ENCODE measurements at regions of chr3 and their contacts with region 1.

Region 1: GRCh38 chr3:156307704-156308103 is 187.3 kb downstream of the KCNAB1 start:
- DNase-seq: no peak
- H3K4me3 ChIP-seq: no peak overlapping the region
- H3K27ac ChIP-seq: peak overlapping the region in 2 of 4 donors; percentile 11 to 16
- H3K4me1 ChIP-seq: peaks cover 0 to 31% (median 31%) of the 10 kb centered on the region in 4 donors
- H3K27me3 ChIP-seq: no peaks in the 10 kb centered on the region
- CTCF ChIP-seq: no peak
- EP300 ChIP-seq: no peak
- POLR2A ChIP-seq: no peak

Region 2: DNA sequence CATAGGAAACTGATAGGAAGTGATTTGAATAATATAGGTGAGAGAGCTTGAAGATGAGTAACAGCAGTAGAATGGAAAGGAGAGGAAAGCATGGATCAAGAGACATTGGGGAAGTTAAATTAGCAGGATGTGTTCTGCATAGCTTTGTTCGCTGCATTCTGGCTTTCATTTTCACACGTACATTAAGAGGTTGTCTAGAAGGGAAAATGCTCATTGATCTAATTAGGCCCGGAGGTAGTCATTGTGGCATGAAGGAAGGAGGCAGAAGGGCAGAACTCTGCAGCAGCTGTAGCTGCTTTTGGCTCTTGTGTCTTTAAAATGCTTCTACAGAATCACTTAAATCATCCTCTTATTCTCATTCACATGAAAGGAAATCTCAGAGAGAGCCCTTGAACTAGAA is 147.1 kb before region 1 on chr3:
- intact Hi-C with region 1: loop called (anchors 10 kb)
- DNase-seq: peak; percentile 75
- H3K4me3 ChIP-seq: no peak overlapping the region
- H3K27ac ChIP-seq: no peak overlapping the region
- H3K4me1 ChIP-seq: no peaks in the 10 kb centered on the region
- H3K27me3 ChIP-seq: no peaks in the 10 kb centered on the region
- CTCF ChIP-seq: no peak
- EP300 ChIP-seq: no peak
- POLR2A ChIP-seq: no peak